ENCODE measurements at regions of chr6 and their contacts with region 1.

Region 1: GRCh38 chr6:82040405-82041221 is 206.9 kb downstream of the IBTK start:
- DNase-seq: peak in 1 of 2 donors; percentile 50
- ATAC-seq: peak in 7 of 8 donors; percentile 72 to 88 (median 80)
- H3K4me3 ChIP-seq: no peak overlapping the region
- H3K27ac ChIP-seq: peak overlapping the region in 4 of 10 donors; percentile 4 to 22 (median 18)
- H3K4me1 ChIP-seq: peaks cover 0 to 12% (median 5%) of the 10 kb centered on the region in 9 donors
- H3K27me3 ChIP-seq: no peaks in the 10 kb centered on the region
- CTCF ChIP-seq: peak; percentile 46 to 75 (median 71)

Region 2: GRCh38 chr6:81759782-81760181 is 280.8 kb before region 1 on chr6:
- intact Hi-C with region 1: loop called in 5 of 10 experiments (anchors 5 to 10 kb)
- DNase-seq: no peak
- ATAC-seq: no peak
- H3K4me3 ChIP-seq: no peak overlapping the region
- H3K27ac ChIP-seq: no peak overlapping the region
- H3K4me1 ChIP-seq: peaks cover 0 to 29% (median 0%) of the 10 kb centered on the region in 9 donors
- H3K27me3 ChIP-seq: no peaks in the 10 kb centered on the region
- CTCF ChIP-seq: no peak

Region 3: DNA sequence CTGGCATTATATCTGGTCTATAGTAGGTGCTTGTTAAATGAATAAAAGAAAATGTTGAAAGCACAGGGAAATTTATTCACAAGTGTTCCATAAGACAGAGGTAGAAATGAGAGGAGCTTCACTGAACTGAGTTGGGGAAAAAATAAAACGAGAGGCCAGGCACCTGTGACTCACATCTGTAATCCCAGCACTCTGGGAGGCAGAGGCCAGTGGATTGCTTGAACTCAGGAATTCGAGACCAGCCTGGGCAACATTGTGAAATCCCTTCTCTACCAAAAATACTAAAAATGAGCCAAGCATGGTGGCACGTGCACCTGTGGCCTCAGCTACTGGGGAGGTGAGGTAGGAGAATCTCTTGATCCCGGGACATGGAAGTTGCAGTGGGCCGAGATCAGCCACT is 235.1 kb after region 1 on chr6:
- intact Hi-C with region 1: no loop called
- DNase-seq: no peak
- ATAC-seq: no peak
- H3K4me3 ChIP-seq: no peak overlapping the region
- H3K27ac ChIP-seq: no peak overlapping the region
- H3K4me1 ChIP-seq: no peaks in the 10 kb centered on the region
- H3K27me3 ChIP-seq: no peaks in the 10 kb centered on the region
- CTCF ChIP-seq: no peak

Region 4: GRCh38 chr6:82303808-82304207 is 263.2 kb after region 1 on chr6:
- intact Hi-C with region 1: no loop called
- DNase-seq: no peak
- ATAC-seq: no peak
- H3K4me3 ChIP-seq: no peak overlapping the region
- H3K27ac ChIP-seq: no peak overlapping the region
- H3K4me1 ChIP-seq: no peaks in the 10 kb centered on the region
- H3K27me3 ChIP-seq: no peaks in the 10 kb centered on the region
- CTCF ChIP-seq: no peak

Measured in heart right ventricle (tissue), 16 donors.